ENCODE measurements at regions of chr4 and their contacts with region 1.

Region 1: GRCh38 chr4:53189011-53189410 is 176.8 kb downstream of the SCFD2 start:
- DNase-seq: no peak
- H3K4me3 Mint-ChIP-seq: no peak overlapping the region
- H3K27ac Mint-ChIP-seq: no peak overlapping the region
- H3K4me1 Mint-ChIP-seq: no peaks in the 10 kb centered on the region
- H3K27me3 Mint-ChIP-seq: no peaks in the 10 kb centered on the region

Region 2: GRCh38 chr4:53141308-53141707 is 47.7 kb before region 1 on chr4:
- intact Hi-C with region 1: loop called (anchors 5 kb)
- DNase-seq: no peak
- H3K4me3 Mint-ChIP-seq: no peak overlapping the region
- H3K27ac Mint-ChIP-seq: peak overlapping the region; percentile 68
- H3K4me1 Mint-ChIP-seq: peaks cover 19% of the 10 kb centered on the region
- H3K27me3 Mint-ChIP-seq: no peaks in the 10 kb centered on the region

Measured in activated CD4-positive, alpha-beta T cell treated with anti-CD3 and anti-CD28 coated beads, Interleukin-2, amount 10 ng/mL, durations not matched to agents 24 days and 14 days (primary cell).